AG04449 (cell line): ENCODE measurements at regions of chr2 and their contacts with region 1.

Region 1: DNA sequence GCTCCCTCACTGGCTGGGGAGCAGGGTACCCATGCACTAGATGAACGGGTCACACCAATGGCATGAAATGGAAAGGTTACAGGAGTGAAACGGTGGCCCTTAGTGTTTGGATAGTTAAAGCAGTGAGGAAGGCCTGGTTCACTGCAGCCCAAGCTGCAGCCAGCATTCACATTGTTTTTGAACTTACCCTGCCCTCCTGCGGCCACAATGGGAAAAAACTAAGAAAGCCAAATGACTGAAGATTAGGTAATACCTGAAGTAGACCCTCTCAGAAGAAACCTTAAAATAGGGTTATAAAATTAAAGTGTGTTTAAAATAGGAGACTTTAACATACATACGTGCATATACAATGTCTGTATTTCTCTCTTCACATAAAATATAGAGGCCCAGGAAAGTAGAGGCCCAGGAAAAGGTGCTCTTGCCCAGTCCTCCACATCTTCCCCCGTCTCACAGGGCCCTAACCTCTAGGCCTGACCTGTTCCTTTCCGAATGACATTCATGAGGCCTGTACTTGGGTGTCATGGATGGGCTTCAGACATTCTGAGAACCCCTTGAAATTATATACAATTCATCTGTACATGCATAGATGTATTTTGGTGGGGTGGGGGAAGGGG is 33.3 kb downstream of the DOK1 start:
- DNase-seq: no peak
- H3K4me3 ChIP-seq: no peak overlapping the region
- CTCF ChIP-seq: peak; percentile 60

Region 2: DNA sequence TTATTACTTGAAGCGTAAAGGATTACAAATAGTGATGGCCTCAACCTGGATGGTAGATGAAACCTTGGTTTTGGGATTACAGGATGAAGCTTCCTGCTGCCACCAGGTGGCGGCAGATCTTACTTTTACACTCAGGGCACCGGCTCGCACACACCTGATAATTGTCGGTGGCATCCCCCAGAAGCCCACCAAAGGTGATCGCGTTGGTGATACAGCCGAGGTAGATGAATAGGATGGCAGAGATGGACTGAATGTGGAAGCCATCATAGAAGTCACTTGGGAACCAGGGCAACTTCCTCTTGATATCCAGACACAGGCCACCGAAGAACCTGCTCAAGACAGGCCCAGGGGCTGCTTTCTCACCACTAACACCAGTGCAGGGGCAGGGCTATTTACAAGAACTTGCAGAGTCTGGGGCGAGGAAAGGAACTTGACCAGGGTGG is 337.6 kb before region 1 on chr2:
- CTCF ChIA-PET with region 1: interaction called, 11 read pairs
- POLR2A ChIA-PET with region 1: no interaction called
- DNase-seq: no peak
- H3K4me3 ChIP-seq: no peak overlapping the region
- CTCF ChIP-seq: peak; percentile 67

Region 3: GRCh38 chr2:74472086-74472944 is 115.5 kb before region 1 on chr2 and contains the start of gene MRPL53:
- CTCF ChIA-PET with region 1: interaction called, 15 read pairs
- POLR2A ChIA-PET with region 1: interaction called, 3 read pairs
- DNase-seq: peak; percentile 47
- H3K4me3 ChIP-seq: peak within 1 kb of the TSS; percentile 88
- CTCF ChIP-seq: no peak

Region 4: DNA sequence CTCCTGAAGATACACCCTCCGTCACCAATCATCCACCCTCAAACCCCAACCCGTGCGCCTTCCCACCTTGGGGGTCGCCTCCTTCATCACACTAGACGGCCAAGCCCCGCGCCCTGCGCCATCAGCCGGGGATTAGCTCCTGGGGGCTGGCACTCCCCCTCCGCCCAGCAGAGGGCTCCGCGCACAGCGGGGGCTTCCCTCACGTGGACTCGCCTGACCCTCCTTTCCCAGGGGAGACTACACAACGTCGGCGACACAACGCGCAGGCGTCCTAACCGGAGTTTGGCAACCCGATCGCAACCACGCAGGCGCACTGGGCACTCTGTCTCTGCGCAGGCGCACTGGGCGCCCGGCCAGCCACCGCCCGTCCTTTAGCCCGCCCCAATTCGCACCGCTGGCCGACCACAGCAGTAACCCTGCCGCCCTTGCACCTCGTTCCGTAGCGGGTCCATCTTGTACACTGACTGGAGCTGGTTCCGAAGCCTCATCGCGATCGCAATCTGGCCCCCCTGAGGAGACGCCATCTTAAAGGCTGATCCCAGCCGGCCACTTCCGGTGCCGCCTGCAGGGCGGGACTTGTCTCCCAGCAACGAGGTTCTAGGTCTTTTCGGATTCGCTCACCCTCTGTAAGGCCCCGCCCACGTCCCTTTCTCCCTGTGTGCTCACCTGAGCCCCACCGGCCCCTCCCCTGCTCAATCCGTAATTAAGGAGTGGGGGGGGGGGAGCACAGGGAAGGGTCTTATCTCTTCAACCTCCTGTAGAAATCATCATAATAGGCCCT is 80.4 kb before region 1 on chr2 and contains the start of gene PCGF1:
- CTCF ChIA-PET with region 1: interaction called, 202 read pairs
- POLR2A ChIA-PET with region 1: interaction called, 4 read pairs
- DNase-seq: peak; percentile 87
- H3K4me3 ChIP-seq: peak within 1 kb of the TSS; percentile 100
- CTCF ChIP-seq: peak; percentile 70

Region 5: DNA sequence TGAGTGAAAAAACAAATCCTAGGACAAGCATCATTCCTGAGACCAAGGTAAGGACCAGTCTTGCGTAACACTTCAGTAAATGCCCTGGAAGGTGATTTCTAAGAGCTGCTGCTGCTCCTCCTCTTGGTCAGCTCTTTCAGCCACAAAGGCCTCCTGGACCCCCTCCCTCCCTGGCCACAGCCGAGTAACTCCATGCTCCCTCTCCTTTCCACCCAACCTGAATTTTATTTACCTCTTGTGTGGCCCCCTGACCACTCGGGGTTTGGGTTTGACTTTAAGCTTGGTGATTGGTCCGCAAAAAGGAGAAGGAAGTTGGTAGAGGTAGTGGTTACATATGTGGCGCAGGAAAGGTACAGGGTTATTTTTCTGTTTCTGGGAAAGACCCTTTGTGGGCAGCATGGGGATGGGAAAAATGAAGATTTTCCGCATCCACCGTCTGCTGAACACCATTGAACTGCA is 48.9 kb before region 1 on chr2:
- CTCF ChIA-PET with region 1: interaction called, 137 read pairs
- POLR2A ChIA-PET with region 1: interaction called, 3 read pairs
- DNase-seq: no peak
- H3K4me3 ChIP-seq: no peak overlapping the region
- CTCF ChIP-seq: no peak

Region 6: GRCh38 chr2:74573747-74574562 is 13.8 kb before region 1 on chr2:
- CTCF ChIA-PET with region 1: interaction called, 204 read pairs
- POLR2A ChIA-PET with region 1: interaction called, 6 read pairs
- DNase-seq: no peak
- H3K4me3 ChIP-seq: no peak overlapping the region
- CTCF ChIP-seq: no peak

Region 7: DNA sequence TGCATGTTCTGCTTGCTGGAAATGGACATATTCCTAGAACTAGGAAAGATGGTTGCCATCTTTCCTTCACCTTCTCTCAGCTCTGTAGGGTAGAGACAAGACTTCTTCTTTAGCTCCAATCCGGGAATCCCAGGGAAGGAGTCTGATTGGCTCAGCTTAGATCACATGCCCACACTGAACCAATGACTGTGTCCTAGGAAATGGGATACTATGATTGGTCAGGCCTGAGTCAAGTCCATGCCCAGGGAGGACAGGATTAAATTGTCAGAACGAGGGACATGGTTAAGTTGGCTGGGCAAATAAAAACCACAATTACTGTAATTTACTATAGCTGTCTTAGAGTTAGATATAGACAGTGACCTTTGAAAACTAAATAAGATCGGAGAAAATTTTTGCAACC is 97.6 kb after region 1 on chr2:
- CTCF ChIA-PET with region 1: no interaction called
- POLR2A ChIA-PET with region 1: no interaction called
- DNase-seq: no peak
- H3K4me3 ChIP-seq: no peak overlapping the region
- CTCF ChIP-seq: no peak